ENCODE measurements at regions of chr13 and their contacts with region 1.

Region 1: DNA sequence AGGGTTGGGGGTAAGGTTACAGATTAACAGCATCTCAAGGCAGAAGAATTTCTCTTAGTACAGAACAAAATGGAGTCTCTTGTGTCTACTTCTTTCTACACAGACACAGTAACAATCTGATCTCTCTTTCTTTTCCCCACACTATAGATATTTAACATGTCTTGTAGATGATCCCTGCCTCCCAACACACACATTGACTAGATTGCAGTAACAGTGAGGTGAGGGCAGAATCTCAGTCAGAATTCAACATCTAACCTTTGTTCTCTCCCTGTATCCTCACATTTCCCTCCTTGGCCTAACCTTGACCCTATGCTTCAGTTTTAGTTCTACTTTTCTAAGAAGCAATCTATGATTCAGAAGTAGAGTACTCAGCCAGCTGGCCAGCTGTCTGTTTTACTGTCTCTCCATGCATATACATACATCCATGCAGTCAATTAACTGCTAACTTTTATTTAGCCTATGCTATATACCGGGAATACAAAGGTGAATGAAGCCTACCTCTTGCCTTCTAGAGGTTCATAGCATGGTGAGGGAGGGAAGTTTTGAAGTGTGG is 18.1 kb downstream of the DNAJC15 start:
- DNase-seq: no peak
- H3K4me3 Mint-ChIP-seq: no peak overlapping the region
- H3K27ac Mint-ChIP-seq: no peak overlapping the region
- H3K4me1 Mint-ChIP-seq: peaks cover 60% of the 10 kb centered on the region
- H3K27me3 Mint-ChIP-seq: no peaks in the 10 kb centered on the region
- CTCF ChIP-seq: no peak

Region 2: GRCh38 chr13:42991892-42992763 is 49.3 kb before region 1 on chr13 and contains the start of gene EPSTI1:
- CTCF ChIA-PET with region 1: no interaction called
- intact Hi-C with region 1: loop called (anchors 10 kb)
- DNase-seq: peak; percentile 46
- H3K4me3 Mint-ChIP-seq: peak within 1 kb of the TSS; percentile 83
- H3K27ac Mint-ChIP-seq: peak within 1 kb of the TSS; percentile 56
- H3K4me1 Mint-ChIP-seq: peaks cover 15% of the 10 kb centered on the region
- H3K27me3 Mint-ChIP-seq: no peaks in the 10 kb centered on the region
- CTCF ChIP-seq: no peak
- total RNA-seq, gene EPSTI1: 11.5 and 31.9 TPM in 2 replicates

Measured in Calu3 (cell line).